ENCODE measurements at regions of chr2 and their contacts with region 1.

Region 1: GRCh38 chr2:205680067-205680466 is 2.2 kb upstream of the NRP2 start:
- DNase-seq: peak; percentile 96
- ATAC-seq: peak; percentile 51
- H3K4me3 ChIP-seq: no peak overlapping the region
- H3K27ac ChIP-seq: no peak overlapping the region
- H3K4me1 ChIP-seq: peaks cover 35% of the 10 kb centered on the region
- H3K27me3 ChIP-seq: no peaks in the 10 kb centered on the region
- CTCF ChIP-seq: peak; percentile 92

Region 2: DNA sequence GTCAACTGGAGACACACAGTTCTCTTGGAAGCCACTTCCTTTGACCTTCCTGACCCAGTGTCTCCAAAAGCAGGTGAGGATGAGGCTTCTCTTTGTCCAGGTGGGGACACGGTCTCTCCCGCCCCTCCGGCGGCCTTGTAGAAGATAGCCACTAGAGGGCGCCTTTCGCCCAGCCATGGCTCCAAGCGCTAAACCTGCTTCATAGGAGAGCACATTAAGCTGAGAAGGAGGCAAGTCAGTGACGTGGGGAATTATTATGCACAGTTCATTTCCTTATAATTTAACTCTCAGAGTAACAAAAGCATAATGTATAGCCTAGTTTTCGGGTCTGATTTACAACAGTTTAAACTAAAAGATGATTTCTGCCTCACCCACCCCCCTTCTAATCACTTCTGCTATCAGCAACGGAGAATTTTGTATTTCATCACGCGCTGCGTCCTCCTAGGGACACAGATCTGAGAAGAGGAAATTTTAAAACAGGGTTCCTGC is 1534.8 kb before region 1 on chr2:
- CTCF ChIA-PET with region 1: interaction called, 5 read pairs
- POLR2A ChIA-PET with region 1: no interaction called
- intact Hi-C with region 1: loop called (anchors 5 kb)
- DNase-seq: peak; percentile 87
- ATAC-seq: peak; percentile 99
- H3K4me3 ChIP-seq: peak overlapping the region; percentile 68
- H3K27ac ChIP-seq: no peak overlapping the region
- H3K4me1 ChIP-seq: no peaks in the 10 kb centered on the region
- H3K27me3 ChIP-seq: peaks cover 64% of the 10 kb centered on the region
- CTCF ChIP-seq: peak; percentile 98

Region 3: GRCh38 chr2:204545023-204545860 is 1134.8 kb before region 1 on chr2 and contains the start of gene PARD3B:
- CTCF ChIA-PET with region 1: no interaction called
- POLR2A ChIA-PET with region 1: no interaction called
- intact Hi-C with region 1: loop called (anchors 10 kb)
- DNase-seq: peak; percentile 74
- ATAC-seq: peak; percentile 84
- H3K4me3 ChIP-seq: peak within 1 kb of the TSS; percentile 80
- H3K27ac ChIP-seq: peak within 1 kb of the TSS; percentile 49
- H3K4me1 ChIP-seq: peaks cover 20% of the 10 kb centered on the region
- H3K27me3 ChIP-seq: no peaks in the 10 kb centered on the region
- CTCF ChIP-seq: no peak
- total RNA-seq, gene PARD3B: 3.9 and 10.9 TPM in 2 replicates

Region 4: GRCh38 chr2:205024822-205025518 is 655.1 kb before region 1 on chr2:
- CTCF ChIA-PET with region 1: no interaction called
- POLR2A ChIA-PET with region 1: no interaction called
- intact Hi-C with region 1: loop called (anchors 10 kb)
- DNase-seq: peak; percentile 95
- ATAC-seq: peak; percentile 95
- H3K4me3 ChIP-seq: peak overlapping the region; percentile 49
- H3K27ac ChIP-seq: peak overlapping the region; percentile 72
- H3K4me1 ChIP-seq: peaks cover 18% of the 10 kb centered on the region
- H3K27me3 ChIP-seq: no peaks in the 10 kb centered on the region
- CTCF ChIP-seq: no peak

Region 5: DNA sequence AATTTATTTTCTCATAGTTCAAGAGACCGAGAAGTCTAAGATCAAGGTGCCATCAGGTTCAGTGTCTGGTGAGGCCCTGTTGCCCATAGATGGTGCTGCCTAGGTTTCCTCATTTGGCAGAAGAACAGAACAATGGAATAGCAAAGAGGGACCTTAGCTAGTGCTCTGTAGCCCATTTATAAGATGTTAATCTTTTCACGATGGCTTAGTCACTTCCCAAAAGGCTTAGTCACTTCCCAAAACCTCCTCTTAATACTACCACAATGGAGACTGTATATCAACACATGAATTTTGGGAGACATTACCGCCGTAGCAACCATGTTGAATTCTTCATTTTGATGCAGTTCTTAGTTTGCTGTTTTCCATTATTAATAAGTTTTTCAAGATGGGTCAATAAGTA is 244.1 kb before region 1 on chr2:
- CTCF ChIA-PET with region 1: no interaction called
- POLR2A ChIA-PET with region 1: no interaction called
- intact Hi-C with region 1: loop called (anchors 5 kb)
- DNase-seq: peak; percentile 84
- ATAC-seq: peak; percentile 98
- H3K4me3 ChIP-seq: no peak overlapping the region
- H3K27ac ChIP-seq: no peak overlapping the region
- H3K4me1 ChIP-seq: peaks cover 3% of the 10 kb centered on the region; the same call in 1 of the 2 replicates
- H3K27me3 ChIP-seq: no peaks in the 10 kb centered on the region
- CTCF ChIP-seq: 0 out of 2 replicates have a peak, but pooled peaks have one; percentile 16

Region 6: GRCh38 chr2:205640716-205641115 is 39.4 kb before region 1 on chr2:
- CTCF ChIA-PET with region 1: no interaction called
- POLR2A ChIA-PET with region 1: no interaction called
- intact Hi-C with region 1: no loop called
- DNase-seq: no peak
- ATAC-seq: no peak
- H3K4me3 ChIP-seq: no peak overlapping the region
- H3K27ac ChIP-seq: no peak overlapping the region
- H3K4me1 ChIP-seq: peaks cover 12% of the 10 kb centered on the region
- H3K27me3 ChIP-seq: no peaks in the 10 kb centered on the region
- CTCF ChIP-seq: no peak

Region 7: GRCh38 chr2:205748639-205749477 is 68.8 kb after region 1 on chr2:
- CTCF ChIA-PET with region 1: no interaction called
- POLR2A ChIA-PET with region 1: no interaction called
- intact Hi-C with region 1: loop called (anchors 5 kb)
- DNase-seq: peak; percentile 93
- ATAC-seq: peak; percentile 72
- H3K4me3 ChIP-seq: 0 out of 2 replicates have a peak overlapping the region, but pooled peaks have one; percentile 9
- H3K27ac ChIP-seq: peak overlapping the region; percentile 99
- H3K4me1 ChIP-seq: peaks cover 69% of the 10 kb centered on the region
- H3K27me3 ChIP-seq: no peaks in the 10 kb centered on the region
- CTCF ChIP-seq: no peak

Region 8: DNA sequence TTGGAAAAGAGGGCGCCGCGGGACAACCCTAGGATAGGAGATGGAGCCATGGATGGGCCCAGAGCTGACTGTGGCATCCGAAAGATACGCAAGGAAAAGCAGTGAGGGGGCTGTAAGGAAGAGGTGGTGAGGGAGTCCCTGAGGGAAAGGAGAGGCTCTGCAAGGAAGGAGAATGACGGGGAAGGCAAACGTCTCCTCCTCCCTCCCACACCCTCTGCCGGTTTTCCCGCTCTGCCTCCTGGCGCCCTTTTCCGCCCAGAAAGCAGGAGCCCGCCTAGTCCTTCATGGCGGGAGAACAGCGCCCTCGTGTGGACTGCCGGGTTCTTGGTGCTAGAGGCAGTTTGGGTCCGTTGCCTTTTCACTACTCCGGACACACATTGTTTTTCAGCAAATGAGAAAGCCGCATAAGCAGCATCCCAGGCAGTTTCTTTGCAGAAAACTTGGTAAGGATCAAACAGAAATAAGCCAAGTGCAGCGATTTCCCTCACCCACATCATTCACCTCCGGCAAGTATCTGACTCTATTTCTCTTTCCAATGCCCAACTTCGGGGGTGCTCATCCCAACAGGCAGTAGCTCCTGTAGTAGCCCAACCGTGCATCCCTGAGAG is 205.5 kb after region 1 on chr2:
- CTCF ChIA-PET with region 1: no interaction called
- POLR2A ChIA-PET with region 1: no interaction called
- intact Hi-C with region 1: loop called (anchors 5 kb)
- DNase-seq: peak; percentile 89
- ATAC-seq: peak; percentile 91
- H3K4me3 ChIP-seq: no peak overlapping the region
- H3K27ac ChIP-seq: no peak overlapping the region
- H3K4me1 ChIP-seq: peaks cover 4% of the 10 kb centered on the region
- H3K27me3 ChIP-seq: 0 out of 2 replicates have a peak, but pooled peaks cover 3% of the 10 kb centered on the region
- CTCF ChIP-seq: peak; percentile 90